T-cell (primary cell): ENCODE measurements at regions of chr12 and their contacts with region 1.

Region 1: DNA sequence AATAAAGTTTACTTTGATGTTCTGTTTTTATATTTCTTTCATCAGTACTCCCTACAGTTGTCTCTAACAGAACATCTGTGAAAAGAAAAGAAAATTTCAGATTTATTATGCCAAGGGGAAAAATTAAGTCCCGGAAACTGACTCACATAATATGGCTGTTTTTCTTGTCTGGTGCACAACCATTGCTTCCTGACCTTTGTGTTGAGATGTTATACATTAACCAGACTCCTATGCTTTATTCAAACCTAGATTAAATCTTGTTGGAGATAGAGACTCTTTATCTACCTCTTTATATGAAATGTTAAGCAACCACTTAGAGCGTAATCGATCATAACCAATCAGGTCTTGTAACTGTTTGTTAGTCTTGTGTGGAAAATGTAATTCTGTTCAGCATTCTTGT is 37.6 kb upstream of the BICD1 start:
- DNase-seq: no peak
- ATAC-seq: no peak
- H3K4me3 ChIP-seq: no peak overlapping the region
- H3K4me3 Mint-ChIP-seq: no peak overlapping the region
- H3K27ac ChIP-seq: no peak overlapping the region
- H3K27ac Mint-ChIP-seq: no peak overlapping the region
- H3K4me1 ChIP-seq: no peaks in the 10 kb centered on the region
- H3K4me1 Mint-ChIP-seq: no peaks in the 10 kb centered on the region
- H3K27me3 ChIP-seq: no peaks in the 10 kb centered on the region
- H3K27me3 Mint-ChIP-seq: no peaks in the 10 kb centered on the region

Region 2: GRCh38 chr12:31749024-31749704 is 319.9 kb before region 1 on chr12:
- CTCF ChIA-PET with region 1: no interaction called
- POLR2A ChIA-PET with region 1: no interaction called
- DNase-seq: peak in 21 of 35 experiments; percentile 18 to 60 (median 28)
- ATAC-seq: peak; percentile 55 to 94 (median 84)
- H3K4me3 ChIP-seq: no peak overlapping the region
- H3K4me3 Mint-ChIP-seq: peak overlapping the region; percentile 22 to 49 (median 42)
- H3K27ac ChIP-seq: peak overlapping the region; percentile 38
- H3K27ac Mint-ChIP-seq: peak overlapping the region; percentile 64 to 79
- H3K4me1 ChIP-seq: peaks cover 7 to 42% of the 10 kb centered on the region in 2 experiments
- H3K4me1 Mint-ChIP-seq: peaks cover 53 to 69% (median 62%) of the 10 kb centered on the region in 3 donors
- H3K27me3 ChIP-seq: no peaks in the 10 kb centered on the region
- H3K27me3 Mint-ChIP-seq: no peaks in the 10 kb centered on the region

Region 3: DNA sequence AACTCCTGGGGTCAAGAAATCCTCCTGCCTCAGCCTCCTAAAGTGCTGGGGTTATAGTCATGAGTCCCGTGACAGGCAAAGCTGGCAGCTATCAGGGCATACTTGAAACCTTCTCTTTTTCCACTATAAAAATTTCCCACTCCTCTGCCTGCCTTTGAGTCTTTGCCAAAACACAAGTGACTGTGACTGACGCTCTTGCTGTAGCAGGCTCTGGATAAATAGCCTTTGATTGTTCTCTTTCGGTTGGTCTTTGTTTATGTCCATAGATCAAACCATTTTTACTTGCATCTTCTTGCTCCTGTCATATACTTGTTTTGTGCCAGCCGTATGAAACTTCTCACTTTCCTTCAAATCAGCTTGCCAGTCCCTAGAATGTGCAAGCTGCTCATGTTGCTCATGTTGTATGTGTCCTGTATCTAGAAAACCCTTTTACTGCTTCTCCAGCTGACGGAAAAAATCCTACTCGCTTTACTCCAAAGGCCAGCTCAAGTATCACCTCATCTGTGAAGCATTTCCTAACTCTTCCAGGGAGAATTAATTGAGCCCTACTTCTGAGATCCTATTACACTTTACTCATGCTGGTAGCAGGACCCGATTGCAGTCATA is 36.8 kb before region 1 on chr12:
- CTCF ChIA-PET with region 1: no interaction called
- POLR2A ChIA-PET with region 1: no interaction called
- DNase-seq: no peak
- ATAC-seq: no peak
- H3K4me3 ChIP-seq: no peak overlapping the region
- H3K4me3 Mint-ChIP-seq: no peak overlapping the region
- H3K27ac ChIP-seq: no peak overlapping the region
- H3K27ac Mint-ChIP-seq: no peak overlapping the region
- H3K4me1 ChIP-seq: no peaks in the 10 kb centered on the region
- H3K4me1 Mint-ChIP-seq: peaks cover 0 to 10% (median 7%) of the 10 kb centered on the region in 3 donors
- H3K27me3 ChIP-seq: no peaks in the 10 kb centered on the region
- H3K27me3 Mint-ChIP-seq: no peaks in the 10 kb centered on the region

Region 4: GRCh38 chr12:32089586-32089985 is 20.5 kb after region 1 on chr12:
- CTCF ChIA-PET with region 1: no interaction called
- POLR2A ChIA-PET with region 1: no interaction called
- DNase-seq: no peak
- ATAC-seq: no peak
- H3K4me3 ChIP-seq: no peak overlapping the region
- H3K4me3 Mint-ChIP-seq: no peak overlapping the region
- H3K27ac ChIP-seq: no peak overlapping the region
- H3K27ac Mint-ChIP-seq: no peak overlapping the region
- H3K4me1 ChIP-seq: no peaks in the 10 kb centered on the region
- H3K4me1 Mint-ChIP-seq: no peaks in the 10 kb centered on the region
- H3K27me3 ChIP-seq: no peaks in the 10 kb centered on the region
- H3K27me3 Mint-ChIP-seq: no peaks in the 10 kb centered on the region

Region 5: GRCh38 chr12:32240831-32241230 is 171.8 kb after region 1 on chr12:
- CTCF ChIA-PET with region 1: interaction called in 1 of 2 experiments, 10 read pairs
- POLR2A ChIA-PET with region 1: no interaction called
- DNase-seq: no peak
- ATAC-seq: no peak
- H3K4me3 ChIP-seq: no peak overlapping the region
- H3K4me3 Mint-ChIP-seq: no peak overlapping the region
- H3K27ac ChIP-seq: no peak overlapping the region
- H3K27ac Mint-ChIP-seq: no peak overlapping the region
- H3K4me1 ChIP-seq: no peaks in the 10 kb centered on the region
- H3K4me1 Mint-ChIP-seq: no peaks in the 10 kb centered on the region
- H3K27me3 ChIP-seq: no peaks in the 10 kb centered on the region
- H3K27me3 Mint-ChIP-seq: no peaks in the 10 kb centered on the region